ENCODE measurements at regions of chr6 and their contacts with region 1.

Region 1: GRCh38 chr6:89792873-89793272 is 26.7 kb downstream of the MDN1 start:
- DNase-seq: peak; percentile 52
- ATAC-seq: peak; percentile 99
- H3K4me3 ChIP-seq: no peak overlapping the region
- H3K27ac ChIP-seq: no peak overlapping the region
- H3K4me1 ChIP-seq: peaks cover 3% of the 10 kb centered on the region; the same call in 1 of the 2 replicates
- H3K27me3 ChIP-seq: no peaks in the 10 kb centered on the region
- CTCF ChIP-seq: peak; percentile 76
- EP300 ChIP-seq: no peak
- POLR2A ChIP-seq: no peak
- RAD21 ChIP-seq: no peak

Region 2: GRCh38 chr6:89400912-89401399 is 391.9 kb before region 1 on chr6:
- CTCF ChIA-PET with region 1: no interaction called
- POLR2A ChIA-PET with region 1: no interaction called
- in situ Hi-C with region 1: no loop called
- intact Hi-C with region 1: no loop called
- DNase-seq: no peak
- ATAC-seq: no peak
- H3K4me3 ChIP-seq: no peak overlapping the region
- H3K27ac ChIP-seq: no peak overlapping the region
- H3K4me1 ChIP-seq: no peaks in the 10 kb centered on the region
- H3K27me3 ChIP-seq: no peaks in the 10 kb centered on the region
- CTCF ChIP-seq: no peak
- EP300 ChIP-seq: no peak
- POLR2A ChIP-seq: no peak
- RAD21 ChIP-seq: no peak

Region 3: DNA sequence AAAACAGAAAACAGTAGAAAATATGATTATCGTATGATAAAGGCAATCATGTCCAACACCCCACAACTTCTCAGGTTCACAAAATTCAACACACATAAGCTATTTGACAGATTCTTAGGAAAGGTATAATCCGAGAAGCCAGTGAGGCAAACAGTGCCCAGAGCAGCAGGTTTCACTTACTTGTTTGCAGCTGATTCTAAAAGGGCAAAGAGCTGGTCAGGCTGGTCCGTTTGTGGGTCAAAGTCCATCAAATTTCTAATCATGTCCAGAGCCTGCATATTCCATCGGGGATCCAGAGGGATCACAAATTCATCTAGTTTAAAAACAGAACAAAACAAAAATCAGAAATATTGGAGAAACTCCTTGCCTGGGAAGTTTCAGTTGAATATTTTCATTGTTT is 84.6 kb before region 1 on chr6:
- CTCF ChIA-PET with region 1: no interaction called
- POLR2A ChIA-PET with region 1: no interaction called
- in situ Hi-C with region 1: no loop called
- intact Hi-C with region 1: loop called (anchors 5 kb)
- DNase-seq: peak; percentile 39
- ATAC-seq: peak; percentile 94
- H3K4me3 ChIP-seq: no peak overlapping the region
- H3K27ac ChIP-seq: peak overlapping the region; percentile 23
- H3K4me1 ChIP-seq: peaks cover 15% of the 10 kb centered on the region
- H3K27me3 ChIP-seq: no peaks in the 10 kb centered on the region
- CTCF ChIP-seq: no peak
- EP300 ChIP-seq: no peak
- POLR2A ChIP-seq: no peak
- RAD21 ChIP-seq: no peak

Region 4: GRCh38 chr6:89819336-89820130 is 26.7 kb after region 1 on chr6 and contains the start of gene MDN1:
- CTCF ChIA-PET with region 1: no interaction called
- POLR2A ChIA-PET with region 1: no interaction called
- in situ Hi-C with region 1: no loop called
- intact Hi-C with region 1: no loop called
- DNase-seq: peak; percentile 91
- ATAC-seq: peak; percentile 97
- H3K4me3 ChIP-seq: peak within 1 kb of the TSS; percentile 78 to 91 (median 79)
- H3K27ac ChIP-seq: peak within 1 kb of the TSS; percentile 83
- H3K4me1 ChIP-seq: peaks cover 27% of the 10 kb centered on the region
- H3K27me3 ChIP-seq: no peaks in the 10 kb centered on the region; a peak in 1 of 5 replicates
- CTCF ChIP-seq: no peak; the same call in 1 of the 2 replicates
- EP300 ChIP-seq: 0 out of 4 replicates have a peak, but pooled peaks of 1 of the 2 experiments have one; percentile 30
- POLR2A ChIP-seq: peak; percentile 77 to 94
- RAD21 ChIP-seq: peak; percentile 23; the same call in 1 of the 2 replicates
- total RNA-seq, gene MDN1: 52.9 and 91.7 TPM in 2 replicates